Activated naive CD4-positive, alpha-beta T cell treated with anti-CD3 and anti-CD28 coated beads for 36 hours (primary cell): ENCODE measurements at regions of chr4 and their contacts with region 1.

Region 1: GRCh38 chr4:40550948-40551462 is 78.7 kb downstream of the RBM47 start:
- DNase-seq: peak; percentile 34
- H3K4me3 Mint-ChIP-seq: peak overlapping the region; percentile 60
- H3K27ac Mint-ChIP-seq: peak overlapping the region; percentile 55
- H3K4me1 Mint-ChIP-seq: peaks cover 28% of the 10 kb centered on the region
- H3K27me3 Mint-ChIP-seq: no peaks in the 10 kb centered on the region

Region 2: GRCh38 chr4:40502934-40503333 is 48.1 kb before region 1 on chr4:
- CTCF ChIA-PET with region 1: interaction called, 3 read pairs
- intact Hi-C with region 1: loop called (anchors 2 kb)
- DNase-seq: peak; percentile 9
- H3K4me3 Mint-ChIP-seq: no peak overlapping the region
- H3K27ac Mint-ChIP-seq: peak overlapping the region; percentile 71
- H3K4me1 Mint-ChIP-seq: peaks cover 21% of the 10 kb centered on the region
- H3K27me3 Mint-ChIP-seq: no peaks in the 10 kb centered on the region

Region 3: GRCh38 chr4:40699648-40700047 is 148.6 kb after region 1 on chr4:
- CTCF ChIA-PET with region 1: no interaction called
- intact Hi-C with region 1: loop called (anchors 5 kb)
- DNase-seq: no peak
- H3K4me3 Mint-ChIP-seq: no peak overlapping the region
- H3K27ac Mint-ChIP-seq: no peak overlapping the region
- H3K4me1 Mint-ChIP-seq: peaks cover 17% of the 10 kb centered on the region
- H3K27me3 Mint-ChIP-seq: no peaks in the 10 kb centered on the region